PC-9 (cell line): ENCODE measurements at regions of chr7 and their contacts with region 1.

Region 1: GRCh38 chr7:116571037-116571436 is 46.2 kb downstream of the CAV1 start:
- DNase-seq: peak in 1 of 2 experiments; percentile 66
- H3K4me3 ChIP-seq: no peak overlapping the region
- H3K27ac ChIP-seq: peak overlapping the region; percentile 45
- H3K4me1 ChIP-seq: peaks cover 23% of the 10 kb centered on the region
- H3K27me3 ChIP-seq: no peaks in the 10 kb centered on the region
- CTCF ChIP-seq: no peak

Region 2: GRCh38 chr7:116543664-116544063 is 27.4 kb before region 1 on chr7:
- CTCF ChIA-PET with region 1: no interaction called
- POLR2A ChIA-PET with region 1: interaction called, 12 read pairs
- intact Hi-C with region 1: no loop called
- DNase-seq: no peak
- H3K4me3 ChIP-seq: no peak overlapping the region
- H3K27ac ChIP-seq: no peak overlapping the region
- H3K4me1 ChIP-seq: no peaks in the 10 kb centered on the region
- H3K27me3 ChIP-seq: no peaks in the 10 kb centered on the region
- CTCF ChIP-seq: no peak

Region 3: DNA sequence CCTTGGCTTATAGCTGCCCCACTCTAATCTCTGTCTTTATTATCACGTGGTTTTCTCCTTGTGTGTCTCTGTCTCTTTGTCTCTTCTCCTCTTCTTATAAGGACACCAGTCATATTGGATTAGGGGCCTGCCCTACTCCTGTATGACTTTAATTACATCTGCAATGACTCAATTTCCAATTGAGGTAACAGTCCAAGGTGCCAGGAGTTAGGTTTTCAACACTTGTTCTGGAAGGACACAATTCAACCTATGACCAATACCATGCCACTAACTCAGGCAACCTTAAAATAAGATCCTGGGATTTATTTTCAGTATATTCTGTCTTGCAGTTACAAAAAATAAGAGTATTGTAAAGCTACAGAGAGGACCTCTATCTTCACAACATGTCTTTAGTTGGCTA is 79.4 kb after region 1 on chr7:
- CTCF ChIA-PET with region 1: no interaction called
- POLR2A ChIA-PET with region 1: interaction called, 13 read pairs
- intact Hi-C with region 1: no loop called
- DNase-seq: no peak
- H3K4me3 ChIP-seq: no peak overlapping the region
- H3K27ac ChIP-seq: no peak overlapping the region
- H3K4me1 ChIP-seq: peaks cover 10% of the 10 kb centered on the region
- H3K27me3 ChIP-seq: no peaks in the 10 kb centered on the region
- CTCF ChIP-seq: no peak